ENCODE measurements at regions of chr2 and their contacts with region 1.

Region 1: DNA sequence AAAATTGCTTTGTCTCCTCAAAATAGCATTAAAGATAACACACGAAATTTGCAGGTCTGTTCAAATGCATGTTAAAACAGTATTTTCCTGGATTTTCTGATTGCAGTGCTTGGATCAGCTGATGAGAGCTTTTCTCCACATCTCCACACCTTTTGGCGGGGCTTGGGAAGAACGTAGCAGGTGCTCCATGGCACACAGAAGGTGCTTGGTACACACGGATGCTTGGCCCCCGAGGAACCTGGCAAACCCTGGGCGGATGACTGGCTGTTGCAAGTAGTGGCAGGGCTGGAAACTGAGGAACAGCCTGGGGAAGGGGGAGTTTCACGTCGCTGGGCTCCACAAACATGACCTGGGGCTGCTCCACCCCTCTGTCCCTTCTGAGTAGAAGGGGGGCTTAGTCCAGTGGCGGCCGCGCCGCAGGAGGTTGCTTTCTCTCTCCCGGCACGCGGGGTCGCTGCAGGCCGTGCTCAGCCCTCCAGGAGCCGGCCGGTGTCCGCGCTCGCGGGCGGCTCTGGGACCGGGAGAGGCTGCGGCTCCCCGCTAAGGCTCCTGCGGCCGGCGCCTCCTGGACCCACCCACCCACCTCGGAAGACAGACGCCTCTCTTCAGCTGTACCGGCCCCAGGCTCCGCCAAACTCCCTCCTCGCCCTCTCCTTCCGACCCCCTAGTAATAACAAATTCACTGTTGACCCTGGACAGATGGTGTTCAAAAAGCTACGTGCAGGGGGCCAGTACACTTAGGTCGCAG is 69.3 kb downstream of the MARCO start:
- DNase-seq: peak; percentile 79
- H3K4me3 Mint-ChIP-seq: peak overlapping the region; percentile 36
- H3K27ac Mint-ChIP-seq: no peak overlapping the region
- H3K4me1 Mint-ChIP-seq: no peaks in the 10 kb centered on the region
- H3K27me3 Mint-ChIP-seq: peaks cover 73% of the 10 kb centered on the region
- CTCF ChIP-seq: peak; percentile 60

Region 2: DNA sequence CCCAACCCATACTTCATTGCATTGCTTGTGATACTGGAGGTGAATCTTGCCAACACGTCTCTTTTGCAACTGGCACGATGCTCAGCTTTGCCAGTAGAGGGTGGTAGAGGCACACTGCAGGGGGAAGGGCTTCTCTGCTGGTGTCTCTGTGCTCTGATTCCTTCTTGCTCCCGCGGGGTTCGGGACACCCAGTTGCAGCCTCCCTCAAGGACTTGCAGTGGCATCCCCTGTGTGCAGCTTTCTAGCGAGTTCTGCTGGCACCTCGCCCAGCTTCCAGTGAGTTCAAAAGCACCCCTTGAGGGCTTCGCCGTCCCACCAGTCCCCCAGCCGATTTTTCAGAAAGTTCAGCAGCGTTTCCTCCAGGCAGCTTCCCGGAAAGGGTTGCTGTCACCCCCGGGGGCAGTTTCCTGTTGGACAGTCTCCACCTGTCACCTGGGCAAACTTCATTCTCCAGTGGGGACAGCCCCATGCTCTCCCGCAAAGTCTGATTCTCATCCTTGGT is 128.6 kb before region 1 on chr2:
- CTCF ChIA-PET with region 1: interaction called, 10 read pairs
- intact Hi-C with region 1: loop called (anchors 2 kb)
- DNase-seq: peak; percentile 73
- H3K4me3 Mint-ChIP-seq: peak overlapping the region; percentile 65
- H3K27ac Mint-ChIP-seq: no peak overlapping the region
- H3K4me1 Mint-ChIP-seq: peaks cover 9% of the 10 kb centered on the region
- H3K27me3 Mint-ChIP-seq: peaks cover 51% of the 10 kb centered on the region
- CTCF ChIP-seq: peak; percentile 82

Region 3: GRCh38 chr2:119174216-119175037 is 163.1 kb after region 1 on chr2:
- CTCF ChIA-PET with region 1: no interaction called
- intact Hi-C with region 1: loop called (anchors 5 kb)
- DNase-seq: peak; percentile 80
- H3K4me3 Mint-ChIP-seq: no peak overlapping the region
- H3K27ac Mint-ChIP-seq: no peak overlapping the region
- H3K4me1 Mint-ChIP-seq: peaks cover 4% of the 10 kb centered on the region
- H3K27me3 Mint-ChIP-seq: peaks cover 16% of the 10 kb centered on the region
- CTCF ChIP-seq: peak; percentile 76

Region 4: GRCh38 chr2:119264781-119265692 is 253.7 kb after region 1 on chr2:
- CTCF ChIA-PET with region 1: no interaction called
- intact Hi-C with region 1: loop called (anchors 1 kb)
- DNase-seq: peak; percentile 67
- H3K4me3 Mint-ChIP-seq: no peak overlapping the region
- H3K27ac Mint-ChIP-seq: no peak overlapping the region
- H3K4me1 Mint-ChIP-seq: no peaks in the 10 kb centered on the region
- H3K27me3 Mint-ChIP-seq: no peaks in the 10 kb centered on the region
- CTCF ChIP-seq: peak; percentile 82

Region 5: DNA sequence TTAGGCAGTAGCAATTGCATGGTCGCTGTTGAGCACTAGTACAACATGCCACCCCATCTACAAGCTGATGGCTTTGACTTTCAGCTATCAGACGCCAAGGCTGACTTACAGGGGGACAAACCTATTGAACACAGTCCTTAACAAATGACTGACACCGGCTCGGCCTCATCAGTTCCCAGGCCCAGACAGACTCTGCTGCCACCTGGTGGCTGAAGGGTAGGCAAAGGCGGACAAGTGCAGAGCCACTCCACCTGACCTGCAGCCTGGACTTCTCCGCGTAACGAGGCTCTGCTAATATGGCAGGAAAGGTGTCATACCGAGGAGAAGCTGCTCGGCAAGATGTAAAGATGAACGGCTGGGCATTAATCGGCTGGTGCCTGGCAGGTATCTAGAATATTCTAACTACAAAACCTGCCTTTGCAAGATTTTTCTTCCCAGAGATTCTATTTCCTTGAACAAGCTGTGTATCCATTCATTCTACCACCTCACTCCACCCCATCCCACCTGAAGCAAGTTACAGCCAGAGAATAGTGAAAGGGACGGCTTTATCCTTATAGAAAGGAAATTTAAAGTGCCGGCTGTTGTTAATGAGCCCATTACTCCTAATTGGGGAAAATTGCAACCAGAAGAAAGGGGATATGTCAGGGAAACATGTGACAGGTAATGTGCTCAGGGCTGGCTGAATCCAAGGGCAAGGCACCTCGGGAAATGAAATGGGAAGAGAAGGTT is 279.7 kb after region 1 on chr2:
- CTCF ChIA-PET with region 1: interaction called, 5 read pairs
- intact Hi-C with region 1: loop called (anchors 5 kb)
- DNase-seq: peak; percentile 80
- H3K4me3 Mint-ChIP-seq: no peak overlapping the region
- H3K27ac Mint-ChIP-seq: no peak overlapping the region
- H3K4me1 Mint-ChIP-seq: no peaks in the 10 kb centered on the region
- H3K27me3 Mint-ChIP-seq: no peaks in the 10 kb centered on the region
- CTCF ChIP-seq: peak; percentile 64

Region 6: DNA sequence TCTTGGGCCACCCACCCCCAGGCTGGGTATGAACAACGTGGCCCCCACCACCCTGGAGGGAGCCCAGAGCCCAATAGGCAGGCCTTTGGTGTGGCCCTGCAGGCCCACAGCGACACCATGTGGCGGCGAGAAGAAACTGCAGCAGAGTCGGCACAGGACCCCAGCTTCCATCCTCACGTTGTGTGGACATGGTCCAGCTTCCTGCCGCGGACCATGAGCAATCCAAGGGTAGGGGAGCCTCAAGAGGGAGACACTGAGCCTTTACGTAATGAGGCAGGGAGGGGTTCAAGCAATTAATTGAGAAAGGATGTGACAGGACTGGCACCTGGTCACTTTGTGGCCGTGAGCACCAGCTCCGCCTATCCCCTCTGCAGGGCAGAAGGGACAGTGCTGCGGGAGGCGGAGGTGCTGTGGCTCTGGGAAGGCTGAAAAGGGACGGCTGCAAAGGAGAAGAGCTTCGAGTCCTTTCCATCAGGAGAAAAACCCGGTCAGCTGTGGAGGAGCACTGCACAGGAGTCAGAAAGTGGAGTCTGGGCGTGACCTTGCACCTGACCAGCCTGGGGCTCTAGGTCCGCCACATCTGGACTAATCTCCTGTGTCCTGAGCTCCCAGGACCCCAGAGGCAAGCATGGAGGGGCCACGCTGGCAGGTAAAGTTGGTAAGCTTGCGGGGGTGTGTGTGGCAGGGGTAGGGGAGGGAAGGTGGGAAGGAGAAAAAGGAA is 465.1 kb after region 1 on chr2:
- CTCF ChIA-PET with region 1: no interaction called
- intact Hi-C with region 1: loop called (anchors 10 kb)
- DNase-seq: peak; percentile 67
- H3K4me3 Mint-ChIP-seq: no peak overlapping the region
- H3K27ac Mint-ChIP-seq: no peak overlapping the region
- H3K4me1 Mint-ChIP-seq: peaks cover 8% of the 10 kb centered on the region
- H3K27me3 Mint-ChIP-seq: no peaks in the 10 kb centered on the region
- CTCF ChIP-seq: peak; percentile 91